PC-3 (cell line): ENCODE measurements at regions of chr1 and their contacts with region 1.

Region 1: GRCh38 chr1:89524369-89525168 is at the start of gene LRRC8B:
- DNase-seq: peak; percentile 93
- ATAC-seq: peak; percentile 92
- H3K4me3 ChIP-seq: peak within 1 kb of the TSS; percentile 92
- H3K27ac ChIP-seq: peak within 1 kb of the TSS; percentile 79
- H3K4me1 ChIP-seq: peaks cover 23% of the 10 kb centered on the region
- H3K27me3 ChIP-seq: no peaks in the 10 kb centered on the region
- CTCF ChIP-seq: no peak
- total RNA-seq, gene LRRC8B: 8.4 and 12.3 TPM in 2 replicates

Region 2: DNA sequence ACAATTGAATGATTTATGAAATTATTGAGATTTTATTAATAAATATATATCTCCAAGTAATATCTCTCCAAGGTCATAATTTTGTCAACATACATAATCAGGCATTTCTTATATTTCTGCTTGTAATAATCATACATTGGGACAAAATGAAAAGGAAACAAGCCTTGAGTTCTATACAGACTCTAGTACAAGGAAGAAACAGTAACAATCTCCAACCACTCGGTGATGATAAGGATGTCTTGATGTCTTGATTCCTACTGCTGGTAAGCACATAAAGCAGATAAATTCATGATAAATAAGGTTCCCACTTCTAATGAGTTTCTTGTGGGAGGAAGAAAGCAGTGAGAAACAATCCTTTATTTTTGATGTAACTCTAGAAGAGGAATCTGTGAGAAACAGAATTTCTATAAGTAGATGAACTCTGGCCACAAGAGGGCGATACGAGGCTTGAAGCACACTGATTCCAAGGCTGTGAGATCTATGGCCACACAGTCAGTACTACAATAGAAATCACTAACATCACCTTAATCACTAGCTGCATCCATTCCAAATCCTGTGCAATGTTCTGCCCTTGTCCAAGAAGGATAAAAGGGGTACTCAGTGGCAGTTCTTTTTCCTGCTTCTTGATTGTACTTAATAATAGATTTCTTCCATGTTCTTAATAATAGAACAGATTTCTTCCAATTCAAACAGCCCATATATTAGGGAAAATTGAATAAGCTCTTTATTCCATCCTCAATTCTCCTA is 41.4 kb before region 1 on chr1:
- CTCF ChIA-PET with region 1: no interaction called
- POLR2A ChIA-PET with region 1: no interaction called
- intact Hi-C with region 1: loop called (anchors 2 kb)
- DNase-seq: peak; percentile 86
- ATAC-seq: peak; percentile 96
- H3K4me3 ChIP-seq: no peak overlapping the region
- H3K27ac ChIP-seq: no peak overlapping the region
- H3K4me1 ChIP-seq: no peaks in the 10 kb centered on the region
- H3K27me3 ChIP-seq: no peaks in the 10 kb centered on the region
- CTCF ChIP-seq: peak; percentile 89

Region 3: DNA sequence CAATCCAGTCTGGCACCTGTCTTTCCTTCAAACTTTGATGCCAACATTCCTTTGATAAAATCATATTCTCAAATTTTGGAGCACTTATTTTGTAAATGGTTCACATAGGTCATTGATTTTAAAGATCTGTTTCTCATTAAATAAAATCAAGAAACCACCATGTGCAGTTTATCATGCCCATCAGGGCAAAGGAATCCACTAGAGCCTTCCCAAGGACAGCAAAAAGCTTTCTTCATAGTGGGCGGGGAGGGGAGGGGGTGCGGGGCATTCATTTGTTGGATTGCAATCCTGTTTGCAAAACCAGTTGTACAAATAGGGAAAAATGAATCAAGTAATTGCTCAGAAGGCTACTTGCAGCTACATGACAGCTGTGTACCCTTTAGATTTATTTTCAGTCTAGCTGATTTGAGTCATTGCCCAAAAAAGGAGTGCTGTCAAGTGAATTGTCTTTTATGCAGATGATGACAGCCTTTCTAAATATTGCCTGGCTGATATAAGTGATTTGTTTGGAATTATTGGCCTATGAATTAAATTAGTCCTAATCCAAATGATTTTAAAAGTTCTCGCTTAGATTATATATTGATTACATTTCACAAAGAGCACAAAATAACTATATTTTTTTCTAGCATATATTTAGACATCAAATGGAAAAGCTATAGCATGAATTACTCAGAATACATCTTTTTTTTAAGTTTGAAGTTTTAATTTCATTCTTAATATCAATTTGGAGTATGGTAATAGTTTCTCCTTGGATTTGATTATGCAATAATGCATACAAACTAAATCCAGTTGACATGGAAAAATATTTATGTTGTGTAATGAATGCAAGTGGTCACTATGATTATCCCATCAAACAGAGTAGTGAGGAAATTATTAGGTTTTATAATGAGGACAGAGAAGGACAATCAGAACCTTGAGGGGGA is 23.3 kb after region 1 on chr1:
- CTCF ChIA-PET with region 1: no interaction called
- POLR2A ChIA-PET with region 1: no interaction called
- intact Hi-C with region 1: loop called (anchors 1 kb)
- DNase-seq: peak; percentile 91
- ATAC-seq: peak; percentile 75
- H3K4me3 ChIP-seq: no peak overlapping the region
- H3K27ac ChIP-seq: peak overlapping the region; percentile 60
- H3K4me1 ChIP-seq: peaks cover 40% of the 10 kb centered on the region
- H3K27me3 ChIP-seq: no peaks in the 10 kb centered on the region
- CTCF ChIP-seq: no peak